ENCODE measurements at regions of chr9 and their contacts with region 1.

Region 1: GRCh38 chr9:135077497-135078200 is 9.8 kb upstream of the OLFM1 start:
- DNase-seq: peak in 7 of 10 donors; percentile 6 to 46 (median 34)
- H3K4me3 ChIP-seq: peak overlapping the region in 51 of 59 donors; percentile 15 to 78 (median 67)
- H3K27ac ChIP-seq: peak overlapping the region in 8 of 59 donors; percentile 11 to 77 (median 56)
- H3K27me3 ChIP-seq: peaks cover 0 to 9% (median 0%) of the 10 kb centered on the region in 45 donors
- CTCF ChIP-seq: no peak

Region 2: GRCh38 chr9:134781591-134782294 is 295.9 kb before region 1 on chr9:
- intact Hi-C with region 1: loop called in 1 of 2 experiments (anchors 10 kb)
- DNase-seq: no peak
- H3K4me3 ChIP-seq: no peak overlapping the region
- H3K27ac ChIP-seq: no peak overlapping the region
- H3K27me3 ChIP-seq: peaks cover 0 to 4% (median 0%) of the 10 kb centered on the region in 45 donors
- CTCF ChIP-seq: peak in 27 of 56 donors; percentile 11 to 49 (median 24)